T-cell (primary cell): ENCODE measurements at regions of chr2 and their contacts with region 1.

Region 1: DNA sequence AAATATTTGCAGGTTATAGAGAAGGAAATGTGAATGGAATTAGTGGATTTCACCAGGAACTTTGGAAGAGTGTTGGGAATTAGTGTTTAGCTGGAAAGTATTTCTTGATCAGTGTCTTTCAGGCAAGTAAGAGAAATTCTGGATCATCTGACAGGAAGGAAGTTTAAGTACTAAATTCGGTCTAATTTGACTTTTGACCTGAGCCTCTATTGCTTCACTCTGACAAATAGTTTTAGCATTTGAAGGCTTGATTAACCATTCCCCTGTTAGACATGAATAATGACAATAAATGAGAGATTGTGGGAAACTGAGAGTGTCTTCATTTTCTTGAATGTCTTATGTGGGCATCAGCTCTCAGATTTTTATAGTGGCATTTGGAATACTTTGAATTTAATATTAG is 16.0 kb downstream of the CCNT2 start:
- DNase-seq: no peak
- ATAC-seq: no peak
- H3K4me3 ChIP-seq: no peak overlapping the region
- H3K4me3 Mint-ChIP-seq: peak overlapping the region in 1 of 3 donors; percentile 10
- H3K27ac ChIP-seq: no peak overlapping the region
- H3K27ac Mint-ChIP-seq: peak overlapping the region; percentile 9 to 45
- H3K4me1 ChIP-seq: peaks cover 13 to 19% of the 10 kb centered on the region in 2 experiments
- H3K4me1 Mint-ChIP-seq: peaks cover 66 to 73% (median 72%) of the 10 kb centered on the region in 3 donors
- H3K27me3 ChIP-seq: no peaks in the 10 kb centered on the region
- H3K27me3 Mint-ChIP-seq: no peaks in the 10 kb centered on the region

Region 2: DNA sequence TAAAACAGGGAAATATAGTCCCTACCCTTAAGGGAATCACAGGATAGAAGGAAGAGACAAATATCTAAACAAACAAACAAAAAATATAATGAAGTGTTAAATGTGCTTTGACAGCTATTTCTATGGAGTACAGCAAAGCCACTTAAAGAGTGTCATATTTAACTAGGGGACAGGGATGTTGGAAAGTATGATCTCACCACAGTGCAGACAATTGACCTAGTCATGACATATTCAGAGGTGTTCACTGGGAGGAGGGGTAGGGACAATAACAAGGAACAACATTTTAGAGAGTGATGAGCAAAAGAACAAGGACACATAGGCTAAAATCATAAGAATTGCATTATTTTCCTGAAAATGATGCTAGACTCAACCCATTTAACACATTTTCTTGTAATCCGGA is 323.3 kb before region 1 on chr2:
- CTCF ChIA-PET with region 1: interaction called in 1 of 2 experiments, 10 read pairs
- POLR2A ChIA-PET with region 1: no interaction called
- DNase-seq: no peak
- ATAC-seq: no peak
- H3K4me3 ChIP-seq: no peak overlapping the region
- H3K4me3 Mint-ChIP-seq: no peak overlapping the region
- H3K27ac ChIP-seq: no peak overlapping the region
- H3K27ac Mint-ChIP-seq: no peak overlapping the region
- H3K4me1 ChIP-seq: no peaks in the 10 kb centered on the region
- H3K4me1 Mint-ChIP-seq: no peaks in the 10 kb centered on the region
- H3K27me3 ChIP-seq: peaks cover 0 to 3% of the 10 kb centered on the region in 2 experiments
- H3K27me3 Mint-ChIP-seq: peaks cover 0 to 5% of the 10 kb centered on the region in 2 donors